Activated B cell treated with CpG ODN at 0.5 μM for 24 hours (primary cell): ENCODE measurements at regions of chr12 and their contacts with region 1.

Region 1: GRCh38 chr12:39272871-39273770 is 169.8 kb downstream of the KIF21A start:
- DNase-seq: no peak
- ATAC-seq: no peak
- H3K4me3 Mint-ChIP-seq: no peak overlapping the region
- H3K27ac Mint-ChIP-seq: no peak overlapping the region
- H3K4me1 Mint-ChIP-seq: no peaks in the 10 kb centered on the region
- H3K27me3 Mint-ChIP-seq: no peaks in the 10 kb centered on the region
- CTCF ChIP-seq: peak; percentile 78

Region 2: GRCh38 chr12:38138225-38139221 is 1134.6 kb before region 1 on chr12:
- CTCF ChIA-PET with region 1: interaction called, 4 read pairs
- POLR2A ChIA-PET with region 1: no interaction called
- intact Hi-C with region 1: loop called (anchors 1 kb)
- DNase-seq: no peak
- ATAC-seq: peak; percentile 54
- H3K4me3 Mint-ChIP-seq: peak overlapping the region; percentile 42
- H3K27ac Mint-ChIP-seq: no peak overlapping the region
- H3K4me1 Mint-ChIP-seq: peaks cover 8% of the 10 kb centered on the region
- H3K27me3 Mint-ChIP-seq: peaks cover 6% of the 10 kb centered on the region
- CTCF ChIP-seq: peak; percentile 72

Region 3: DNA sequence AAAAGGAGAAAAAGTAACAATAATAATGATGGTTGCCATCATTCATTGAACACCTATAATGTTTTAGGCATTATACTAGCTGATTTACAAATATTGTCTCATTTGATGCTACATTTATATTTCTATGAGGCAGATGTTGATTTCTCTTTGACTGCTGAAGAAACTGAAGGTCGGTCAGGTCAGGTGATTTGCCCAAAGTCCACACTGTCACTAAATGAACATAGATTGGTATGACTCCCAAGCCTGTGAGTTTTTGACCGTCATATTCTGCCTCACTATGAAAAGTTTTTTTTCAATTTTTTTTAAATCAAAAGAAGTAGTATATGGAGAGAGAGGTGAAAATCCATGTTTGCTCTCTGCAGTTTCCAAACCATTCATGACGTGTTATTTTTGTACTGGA is 945.8 kb before region 1 on chr12:
- CTCF ChIA-PET with region 1: interaction called, 13 read pairs
- POLR2A ChIA-PET with region 1: no interaction called
- intact Hi-C with region 1: loop called (anchors 1 kb)
- DNase-seq: no peak
- ATAC-seq: no peak
- H3K4me3 Mint-ChIP-seq: no peak overlapping the region
- H3K27ac Mint-ChIP-seq: no peak overlapping the region
- H3K4me1 Mint-ChIP-seq: peaks cover 1% of the 10 kb centered on the region
- H3K27me3 Mint-ChIP-seq: no peaks in the 10 kb centered on the region
- CTCF ChIP-seq: no peak

Region 4: GRCh38 chr12:38332814-38333213 is 940.3 kb before region 1 on chr12:
- CTCF ChIA-PET with region 1: interaction called, 13 read pairs
- POLR2A ChIA-PET with region 1: no interaction called
- intact Hi-C with region 1: loop called (anchors 1 kb)
- DNase-seq: no peak
- ATAC-seq: no peak
- H3K4me3 Mint-ChIP-seq: no peak overlapping the region
- H3K27ac Mint-ChIP-seq: no peak overlapping the region
- H3K4me1 Mint-ChIP-seq: peaks cover 1% of the 10 kb centered on the region
- H3K27me3 Mint-ChIP-seq: no peaks in the 10 kb centered on the region
- CTCF ChIP-seq: no peak

Region 5: GRCh38 chr12:38921025-38921677 is 352.0 kb before region 1 on chr12:
- CTCF ChIA-PET with region 1: interaction called, 5 read pairs
- POLR2A ChIA-PET with region 1: no interaction called
- intact Hi-C with region 1: loop called (anchors 2 kb)
- DNase-seq: no peak
- ATAC-seq: no peak
- H3K4me3 Mint-ChIP-seq: no peak overlapping the region
- H3K27ac Mint-ChIP-seq: no peak overlapping the region
- H3K4me1 Mint-ChIP-seq: no peaks in the 10 kb centered on the region
- H3K27me3 Mint-ChIP-seq: no peaks in the 10 kb centered on the region
- CTCF ChIP-seq: no peak

Region 6: DNA sequence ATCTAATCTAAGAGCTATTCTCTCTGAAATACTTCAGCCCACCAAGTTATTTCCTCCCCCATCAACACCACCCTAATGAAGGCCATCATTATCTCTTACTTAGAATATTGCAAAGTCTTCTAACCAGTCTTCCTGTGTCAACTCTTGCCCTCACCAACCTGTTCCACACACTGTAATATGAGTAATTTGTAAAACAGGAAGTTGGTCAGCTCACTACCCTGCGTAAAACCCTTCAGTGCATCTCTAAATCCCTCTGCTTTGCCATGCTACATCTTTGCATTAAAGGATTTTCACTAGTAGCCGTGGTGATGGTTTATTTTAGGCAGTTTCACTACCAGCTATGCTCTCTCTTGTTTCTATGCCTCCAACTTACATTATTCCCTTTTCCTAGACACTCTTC is 99.8 kb after region 1 on chr12:
- CTCF ChIA-PET with region 1: no interaction called
- POLR2A ChIA-PET with region 1: no interaction called
- intact Hi-C with region 1: no loop called
- DNase-seq: no peak
- ATAC-seq: peak; percentile 34
- H3K4me3 Mint-ChIP-seq: no peak overlapping the region
- H3K27ac Mint-ChIP-seq: no peak overlapping the region
- H3K4me1 Mint-ChIP-seq: peaks cover 2% of the 10 kb centered on the region
- H3K27me3 Mint-ChIP-seq: no peaks in the 10 kb centered on the region
- CTCF ChIP-seq: no peak